HCT116 (cell line): ENCODE measurements at regions of chr6 and their contacts with region 1.

Region 1: DNA sequence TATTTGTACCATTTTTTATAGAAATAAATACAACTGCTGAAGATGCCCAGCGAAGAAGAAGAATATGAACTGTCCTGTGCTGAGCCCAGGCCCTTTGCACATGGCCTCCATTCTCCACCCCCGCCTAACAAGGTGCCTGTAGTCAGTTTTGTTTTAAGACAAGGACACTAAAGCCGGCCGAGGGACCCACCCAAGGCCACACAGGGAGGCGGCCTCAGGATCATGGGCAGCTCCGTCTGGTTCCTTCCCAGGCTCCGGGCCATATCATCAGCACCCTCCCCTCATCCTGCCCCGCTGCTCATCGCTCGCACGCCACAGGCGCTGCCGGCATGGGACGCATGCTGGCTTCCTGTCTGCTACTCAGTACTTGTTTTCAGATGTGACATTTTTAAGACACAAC is 21.3 kb downstream of the PSMG4 start:
- DNase-seq: no peak
- ATAC-seq: 0 out of 2 replicates have a peak, but pooled peaks have one; percentile 21
- H3K4me3 ChIP-seq: no peak overlapping the region
- H3K27ac ChIP-seq: no peak overlapping the region
- H3K4me1 ChIP-seq: no peaks in the 10 kb centered on the region
- H3K27me3 ChIP-seq: no peaks in the 10 kb centered on the region
- CTCF ChIP-seq: no peak
- POLR2A ChIP-seq: no peak
- RAD21 ChIP-seq: no peak

Region 2: GRCh38 chr6:3456755-3457466 is 176.8 kb after region 1 on chr6 and contains the start of gene SLC22A23:
- CTCF ChIA-PET with region 1: no interaction called
- POLR2A ChIA-PET with region 1: no interaction called
- RAD21 ChIA-PET with region 1: no interaction called
- intact Hi-C with region 1: loop called (anchors 2 kb)
- DNase-seq: peak; percentile 46
- ATAC-seq: peak; percentile 77
- H3K4me3 ChIP-seq: peak within 1 kb of the TSS; percentile 60 to 75
- H3K27ac ChIP-seq: peak within 1 kb of the TSS; percentile 60; the same call in 1 of the 2 replicates
- H3K4me1 ChIP-seq: peaks cover 10 to 22% of the 10 kb centered on the region in 2 experiments
- H3K27me3 ChIP-seq: no peaks in the 10 kb centered on the region
- CTCF ChIP-seq: peak; percentile 32 to 72 (median 51); a peak in 5 of 6 replicates
- POLR2A ChIP-seq: peak; percentile 30
- RAD21 ChIP-seq: peak; percentile 53
- total RNA-seq, gene SLC22A23: 11.5 TPM

Region 3: DNA sequence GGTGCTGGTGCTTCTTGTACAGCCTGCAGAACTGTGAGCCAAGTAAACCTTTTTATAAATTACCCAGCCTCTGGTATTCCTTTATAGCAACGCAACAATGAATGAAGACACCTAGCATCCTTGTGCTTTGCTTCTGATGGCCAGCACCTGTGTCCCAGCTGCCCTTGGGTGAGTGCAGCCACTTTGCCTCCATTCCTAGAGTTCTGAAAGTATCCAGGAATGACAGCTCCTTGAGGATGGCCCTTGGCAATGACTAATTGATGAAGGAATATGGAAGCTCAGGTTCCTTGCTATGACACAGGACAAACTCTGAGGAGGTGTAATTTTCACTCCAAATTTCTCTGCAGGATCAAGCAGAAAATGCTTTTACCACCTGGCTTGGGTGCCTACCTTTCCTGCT is 231.8 kb after region 1 on chr6:
- CTCF ChIA-PET with region 1: interaction called, 3 read pairs
- POLR2A ChIA-PET with region 1: no interaction called
- RAD21 ChIA-PET with region 1: no interaction called
- intact Hi-C with region 1: loop called (anchors 1 kb)
- DNase-seq: no peak
- ATAC-seq: no peak
- H3K4me3 ChIP-seq: no peak overlapping the region
- H3K27ac ChIP-seq: no peak overlapping the region; the same call in 1 of the 2 replicates
- H3K4me1 ChIP-seq: peaks cover 11 to 20% of the 10 kb centered on the region in 2 experiments; a peak in 3 of 4 replicates
- H3K27me3 ChIP-seq: no peaks in the 10 kb centered on the region
- CTCF ChIP-seq: no peak
- POLR2A ChIP-seq: no peak
- RAD21 ChIP-seq: no peak

Region 4: GRCh38 chr6:3766214-3766613 is 486.1 kb after region 1 on chr6:
- CTCF ChIA-PET with region 1: no interaction called
- POLR2A ChIA-PET with region 1: no interaction called
- RAD21 ChIA-PET with region 1: no interaction called
- intact Hi-C with region 1: no loop called
- DNase-seq: no peak
- ATAC-seq: no peak
- H3K4me3 ChIP-seq: no peak overlapping the region
- H3K27ac ChIP-seq: no peak overlapping the region
- H3K4me1 ChIP-seq: no peaks in the 10 kb centered on the region
- H3K27me3 ChIP-seq: no peaks in the 10 kb centered on the region
- CTCF ChIP-seq: no peak
- POLR2A ChIP-seq: no peak
- RAD21 ChIP-seq: no peak